Activated T-helper 1 cell treated with anti-CD3 and anti-CD28 coated beads, Interleukin-12 subunit alpha, Interleukin-12 subunit beta, Interleukin-2, Interleukin-4 antibody, amounts not matched to agents 30 ng/mL and 10 ng/mL and 1 ng/mL, durations not matched to agents 14 hours and 24 hours and 36 hours (primary cell): ENCODE measurements at regions of chr12 and their contacts with region 1.

Region 1: DNA sequence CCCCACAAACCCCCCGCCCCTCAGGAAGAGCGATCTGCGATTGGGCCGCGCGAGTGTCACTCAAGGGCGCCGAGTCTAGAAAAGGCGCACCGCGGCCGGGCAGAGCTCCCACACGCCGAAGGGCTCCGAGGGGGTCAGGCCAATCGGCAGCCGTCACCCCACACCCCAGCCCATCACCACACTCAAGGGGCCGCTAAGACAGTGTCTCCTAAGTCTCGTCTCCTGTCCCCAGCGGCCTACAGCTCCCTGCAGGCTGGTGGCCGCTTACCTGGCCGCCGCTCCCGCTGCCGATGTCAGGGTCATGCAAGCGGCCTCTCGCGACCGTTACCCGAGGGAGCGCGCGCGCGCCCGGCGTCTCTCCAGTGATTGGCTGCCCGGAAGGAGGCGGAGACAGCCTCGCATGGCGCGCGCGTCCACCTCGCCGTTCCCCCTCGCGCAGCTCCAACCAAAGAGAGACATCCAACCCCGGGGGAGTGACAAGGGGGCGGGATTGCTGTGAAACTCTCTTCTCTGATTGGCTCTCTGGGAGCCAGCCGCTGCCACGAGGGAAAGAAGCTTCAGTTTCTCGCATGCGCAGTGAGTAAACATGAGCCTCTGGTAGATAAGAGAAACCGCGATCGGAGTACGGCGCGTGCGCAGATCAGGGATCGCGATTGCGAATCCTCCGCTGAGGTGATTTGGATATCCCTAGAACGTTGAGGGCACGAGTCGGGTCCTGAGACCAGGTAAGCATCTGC is at the starts of genes MPHOSPH9 and MTRFR:
- DNase-seq: peak; percentile 99
- H3K4me3 Mint-ChIP-seq: peak within 1 kb of the TSS; percentile 100
- H3K27ac Mint-ChIP-seq: peak within 1 kb of the TSS; percentile 99
- H3K4me1 Mint-ChIP-seq: peaks cover 68% of the 10 kb centered on the region
- H3K27me3 Mint-ChIP-seq: peaks cover 2% of the 10 kb centered on the region
- total RNA-seq, gene MPHOSPH9: 87.3 and 89.9 TPM in 2 replicates
- total RNA-seq, gene MTRFR: 32.6 and 34.2 TPM in 2 replicates

Region 2: GRCh38 chr12:122500685-122501488 is 732.1 kb before region 1 on chr12 and contains the start of gene ZCCHC8:
- intact Hi-C with region 1: loop called (anchors 1 kb)
- DNase-seq: peak; percentile 96
- H3K4me3 Mint-ChIP-seq: peak within 1 kb of the TSS; percentile 92
- H3K27ac Mint-ChIP-seq: peak within 1 kb of the TSS; percentile 92
- H3K4me1 Mint-ChIP-seq: peaks cover 31% of the 10 kb centered on the region
- H3K27me3 Mint-ChIP-seq: no peaks in the 10 kb centered on the region
- total RNA-seq, gene ZCCHC8: 42.5 and 48.4 TPM in 2 replicates

Region 3: DNA sequence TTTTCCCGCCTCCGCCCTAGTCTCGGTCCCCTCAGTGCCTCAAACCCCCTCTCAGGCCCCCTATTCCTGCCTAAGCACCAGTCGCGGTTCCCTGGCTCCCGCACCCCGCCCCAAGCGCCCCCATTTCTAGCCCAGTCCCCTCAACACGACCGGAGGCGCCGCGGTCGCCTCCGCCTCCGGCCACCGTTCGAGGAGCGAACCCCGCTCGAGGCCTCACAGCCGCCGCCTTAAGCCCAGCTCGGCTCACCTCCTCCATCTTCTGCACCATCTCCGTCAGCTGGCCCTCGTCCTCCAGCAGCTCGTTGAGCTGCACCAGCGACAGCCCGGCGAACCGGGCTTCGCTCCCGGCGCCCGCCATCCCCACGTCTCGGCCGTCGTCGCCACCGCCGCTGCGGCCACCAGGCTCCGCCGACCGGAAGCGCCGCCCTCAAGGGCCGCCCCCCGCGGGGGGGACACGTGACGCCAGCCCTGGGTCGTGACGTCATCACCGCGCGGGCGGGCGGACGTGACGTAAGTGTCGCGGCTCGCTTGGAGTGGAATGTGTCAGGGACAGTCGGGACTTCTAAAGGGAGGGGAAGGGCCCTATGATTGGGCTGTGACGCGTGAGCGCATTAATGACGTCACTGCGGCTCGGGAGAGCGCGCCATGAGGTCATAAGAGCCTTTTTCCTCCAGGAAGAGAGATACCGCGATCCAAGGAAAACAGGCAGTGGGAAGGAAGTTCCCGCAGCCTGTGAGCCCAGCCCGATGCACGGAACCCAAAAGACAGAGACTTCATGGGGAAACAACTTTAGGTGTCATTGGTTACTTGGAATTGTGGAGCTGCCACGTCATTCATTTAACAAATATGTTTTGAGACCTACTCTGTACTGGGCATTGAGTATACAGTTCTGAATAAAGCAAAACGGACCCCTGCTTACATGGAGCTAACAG is 337.0 kb before region 1 on chr12 and contains the start of gene VPS37B:
- intact Hi-C with region 1: loop called (anchors 5 kb)
- DNase-seq: peak; percentile 87
- H3K4me3 Mint-ChIP-seq: peak within 1 kb of the TSS; percentile 91
- H3K27ac Mint-ChIP-seq: peak within 1 kb of the TSS; percentile 91
- H3K4me1 Mint-ChIP-seq: peaks cover 93% of the 10 kb centered on the region
- H3K27me3 Mint-ChIP-seq: peaks cover 5% of the 10 kb centered on the region
- total RNA-seq, gene VPS37B: 12.7 and 14.3 TPM in 2 replicates

Region 4: GRCh38 chr12:123075646-123076171 is 157.3 kb before region 1 on chr12:
- intact Hi-C with region 1: loop called (anchors 1 kb)
- DNase-seq: peak; percentile 81
- H3K4me3 Mint-ChIP-seq: peak overlapping the region; percentile 86
- H3K27ac Mint-ChIP-seq: peak overlapping the region; percentile 99
- H3K4me1 Mint-ChIP-seq: peaks cover 57% of the 10 kb centered on the region
- H3K27me3 Mint-ChIP-seq: peaks cover 2% of the 10 kb centered on the region

Region 5: DNA sequence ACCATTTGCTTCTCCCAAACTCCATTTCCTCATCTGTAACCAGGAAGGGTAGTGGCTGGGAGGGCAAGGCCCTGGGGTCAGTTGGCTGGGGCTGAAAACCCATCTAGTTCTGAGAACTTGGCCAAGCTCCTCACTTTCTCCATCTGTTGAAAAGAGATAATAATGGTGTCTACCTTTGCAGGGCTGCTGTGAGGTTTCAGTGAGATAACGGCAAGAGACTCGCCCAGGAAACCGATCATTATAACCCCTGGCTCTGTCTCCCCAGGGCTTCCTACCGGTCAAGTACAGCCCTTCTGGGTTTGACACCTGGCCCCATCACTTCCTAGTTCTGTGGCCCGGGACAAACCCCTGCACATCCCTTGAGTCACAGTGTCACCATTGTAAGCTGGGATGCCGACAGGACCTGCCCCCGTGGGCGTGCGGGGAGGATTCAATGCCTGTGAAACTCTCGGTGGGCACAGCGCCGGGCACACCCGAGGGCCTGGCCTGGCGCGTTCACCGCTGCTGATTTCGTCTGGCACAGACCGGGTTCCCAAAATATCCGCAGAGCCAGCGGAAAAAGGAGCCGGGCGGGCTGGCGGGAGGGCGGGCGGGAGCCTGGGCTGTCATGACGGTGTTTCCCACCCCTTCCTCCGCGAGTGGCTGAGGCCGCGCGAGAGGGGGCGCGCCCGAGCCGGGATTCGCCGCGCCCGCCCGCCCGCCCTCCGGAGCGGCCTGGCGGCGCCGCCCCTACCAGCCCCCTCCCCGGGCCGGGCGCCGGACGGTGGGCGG is 155.4 kb after region 1 on chr12:
- intact Hi-C with region 1: loop called (anchors 2 kb)
- DNase-seq: peak; percentile 78
- H3K4me3 Mint-ChIP-seq: peak overlapping the region; percentile 82
- H3K27ac Mint-ChIP-seq: peak overlapping the region; percentile 93
- H3K4me1 Mint-ChIP-seq: peaks cover 39% of the 10 kb centered on the region
- H3K27me3 Mint-ChIP-seq: no peaks in the 10 kb centered on the region